Cardiac septum (tissue), 1 donor: ENCODE measurements at regions of chr17 and their contacts with region 1.

Region 1: DNA sequence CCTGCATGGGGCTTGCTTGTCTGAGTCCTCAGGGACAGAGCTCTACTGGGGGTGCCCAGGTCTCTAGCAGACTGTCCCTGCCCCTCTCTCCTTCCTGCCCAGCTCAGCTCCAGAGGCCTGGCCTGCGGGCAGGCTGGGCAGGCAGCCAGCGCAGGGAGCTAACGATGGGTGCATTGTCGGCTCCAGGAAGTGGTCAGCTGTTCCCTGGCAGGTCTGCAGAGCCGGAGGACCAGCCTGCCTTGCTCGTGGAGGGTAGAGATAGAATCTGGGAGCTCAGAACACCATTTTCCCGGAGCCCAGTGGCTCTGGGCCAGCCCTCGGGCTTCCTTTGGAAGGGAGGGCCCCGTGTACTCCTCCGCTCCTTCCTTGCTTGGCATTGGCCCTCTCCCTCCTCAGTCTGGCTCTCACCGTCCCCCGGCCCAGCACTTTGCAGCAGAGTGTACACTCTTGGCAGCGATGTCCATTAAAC is 189.6 kb downstream of the RAB11FIP4 start:
- DNase-seq: peak; percentile 90

Region 2: DNA sequence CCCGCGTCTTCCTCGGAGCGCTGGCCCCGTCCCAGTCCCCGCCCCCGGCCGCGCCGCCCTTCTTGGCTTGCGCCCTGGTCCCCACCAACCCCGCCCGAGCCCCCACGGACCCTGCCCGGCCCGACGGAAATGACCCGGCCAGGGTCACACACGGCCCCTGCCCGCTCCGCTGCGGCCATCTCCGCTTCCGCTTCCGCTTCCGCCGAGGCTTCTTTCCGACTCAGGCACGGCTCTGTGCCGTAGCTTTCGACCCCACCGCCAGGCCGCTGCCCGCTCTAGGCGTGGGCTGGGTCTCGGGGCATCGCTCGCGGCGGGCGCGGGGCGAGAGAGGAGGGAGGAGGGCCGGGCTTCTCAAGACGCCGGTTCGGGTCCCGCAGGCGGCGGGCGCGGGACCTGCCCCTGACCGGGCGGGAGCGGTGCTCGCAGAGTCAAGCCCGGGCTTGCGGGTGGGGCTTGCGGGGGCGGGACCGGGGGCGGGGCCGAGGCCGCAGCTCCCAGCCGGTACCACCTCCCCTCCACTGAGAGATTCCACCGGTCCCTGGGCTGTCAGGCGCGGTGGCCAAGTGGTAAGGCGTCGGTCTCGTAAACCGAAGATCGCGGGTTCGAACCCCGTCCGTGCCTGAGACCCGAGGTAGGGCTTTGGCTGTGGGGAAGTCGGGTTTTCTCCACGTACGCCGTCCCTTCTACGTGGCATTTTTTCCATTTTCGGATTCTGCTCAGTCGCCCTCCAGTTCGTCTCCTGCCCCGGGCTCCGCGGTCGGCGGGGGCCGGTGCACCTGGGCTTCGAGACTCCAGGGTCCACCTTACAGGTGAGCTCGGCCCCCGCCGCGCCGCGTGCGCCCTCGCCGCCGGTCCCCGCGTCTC is 31.3 kb before region 1 on chr17:
- intact Hi-C with region 1: loop called (anchors 2 kb)
- DNase-seq: peak; percentile 95